Activated CD4-positive, alpha-beta memory T cell treated with anti-CD3 and anti-CD28 coated beads for 36 hours (primary cell): ENCODE measurements at regions of chr6 and their contacts with region 1.

Region 1: DNA sequence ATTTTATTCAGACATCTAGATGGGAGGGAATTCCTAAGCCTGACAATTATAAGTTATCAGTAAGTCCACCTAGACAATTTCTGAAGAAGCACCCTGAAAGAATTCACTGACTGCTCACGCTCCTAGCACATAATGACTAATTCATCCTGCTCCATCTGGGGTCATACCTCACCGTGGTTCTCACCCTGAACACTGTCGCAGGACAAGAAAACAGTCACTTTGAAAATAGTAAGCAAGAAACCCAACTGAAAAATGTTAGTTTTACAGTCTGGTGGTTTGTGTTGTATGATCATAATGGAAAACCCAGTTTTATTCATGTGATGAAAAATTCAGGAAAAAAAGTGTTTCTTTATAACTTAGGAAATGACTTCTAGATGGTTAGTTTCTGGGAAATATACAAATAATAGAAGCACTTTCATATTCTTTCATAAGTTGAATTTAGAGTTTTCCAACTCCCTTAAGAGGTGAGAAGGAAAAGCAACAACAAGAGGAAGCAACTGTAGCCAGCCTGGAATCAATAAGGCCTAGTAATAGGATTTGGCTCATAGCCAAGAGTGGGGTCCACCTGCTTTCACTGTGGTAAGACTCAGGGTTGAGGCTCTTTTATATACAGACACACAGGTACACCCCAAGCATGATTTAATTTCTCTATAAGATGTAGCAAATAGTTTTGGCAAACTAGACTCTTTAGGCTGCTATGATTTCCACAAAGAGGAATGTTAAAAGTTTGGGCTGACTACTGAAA is 94.1 kb downstream of the HIVEP2 start:
- DNase-seq: peak; percentile 71
- H3K4me3 Mint-ChIP-seq: peak overlapping the region; percentile 58
- H3K27ac Mint-ChIP-seq: peak overlapping the region; percentile 94
- H3K4me1 Mint-ChIP-seq: peaks cover 97% of the 10 kb centered on the region
- H3K27me3 Mint-ChIP-seq: no peaks in the 10 kb centered on the region

Region 2: DNA sequence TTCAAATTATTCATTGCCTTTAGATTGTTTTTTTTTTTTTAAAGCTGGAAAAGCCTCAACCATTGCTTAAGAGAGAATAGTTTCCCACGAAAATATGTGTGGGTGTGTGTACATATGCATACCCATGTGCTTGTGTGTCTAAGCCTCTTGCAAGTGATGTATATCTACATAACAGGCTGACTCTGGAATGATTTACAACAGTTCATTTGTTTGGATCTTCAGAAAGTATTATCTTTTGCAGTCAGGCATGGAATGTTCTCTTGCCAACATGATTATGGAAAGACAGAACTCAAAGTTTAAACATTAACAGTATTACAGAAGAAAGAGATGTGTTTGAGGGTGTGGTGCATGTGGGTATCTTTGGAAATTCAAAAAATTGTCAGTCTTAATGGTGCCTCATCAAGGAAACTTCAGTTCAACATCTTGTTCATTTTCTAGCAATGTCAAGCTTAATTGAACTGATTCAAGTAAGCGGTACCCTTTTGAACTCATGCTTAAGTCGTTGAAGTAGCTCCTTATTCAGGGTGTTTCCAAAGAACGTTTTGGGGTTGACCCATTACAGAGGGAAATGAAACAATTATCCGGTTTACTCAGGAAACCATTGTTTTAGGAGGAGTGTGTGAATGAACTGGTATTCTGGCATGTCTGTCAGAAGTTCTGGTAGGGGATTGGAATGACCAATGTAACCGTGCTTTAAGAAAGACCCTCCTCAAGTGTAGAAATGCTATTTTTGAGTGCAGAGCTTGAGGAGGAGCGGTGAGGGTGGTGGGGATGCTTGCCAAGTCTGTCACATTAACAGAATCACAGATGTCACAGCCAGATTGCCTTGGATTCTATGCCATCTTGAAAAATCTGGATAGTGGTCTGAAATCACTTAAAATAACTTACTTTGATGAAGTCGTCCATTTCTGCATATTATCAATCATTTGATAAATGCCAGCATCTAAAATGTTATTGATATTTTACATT is 488.8 kb before region 1 on chr6:
- CTCF ChIA-PET with region 1: no interaction called
- POLR2A ChIA-PET with region 1: no interaction called
- intact Hi-C with region 1: no loop called
- DNase-seq: no peak
- H3K4me3 Mint-ChIP-seq: no peak overlapping the region
- H3K27ac Mint-ChIP-seq: no peak overlapping the region
- H3K4me1 Mint-ChIP-seq: no peaks in the 10 kb centered on the region
- H3K27me3 Mint-ChIP-seq: peaks cover 16% of the 10 kb centered on the region

Region 3: DNA sequence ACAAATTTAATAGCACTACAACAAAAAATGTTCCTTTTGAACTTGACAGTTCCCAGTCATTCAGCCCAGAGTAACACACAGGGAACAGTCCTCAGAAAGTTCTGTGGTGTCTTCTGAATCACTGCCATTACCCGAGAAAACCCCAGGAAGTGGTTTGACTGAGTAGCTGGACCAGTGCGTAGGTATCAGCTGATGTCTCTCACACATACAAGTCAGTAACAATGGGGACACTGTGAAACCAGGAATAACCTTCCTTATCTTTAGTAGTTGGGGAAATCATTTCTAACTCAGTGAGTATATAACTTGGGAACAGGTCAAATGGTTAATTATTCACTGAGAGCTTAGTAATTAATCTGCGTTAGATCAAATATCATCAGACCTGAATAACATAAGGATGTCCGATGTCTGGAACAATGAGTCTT is 21.1 kb after region 1 on chr6:
- CTCF ChIA-PET with region 1: interaction called, 4 read pairs
- POLR2A ChIA-PET with region 1: interaction called, 8 read pairs
- intact Hi-C with region 1: loop called (anchors 1 kb)
- DNase-seq: peak; percentile 80
- H3K4me3 Mint-ChIP-seq: peak overlapping the region; percentile 38
- H3K27ac Mint-ChIP-seq: peak overlapping the region; percentile 82
- H3K4me1 Mint-ChIP-seq: peaks cover 85% of the 10 kb centered on the region
- H3K27me3 Mint-ChIP-seq: no peaks in the 10 kb centered on the region